Right cardiac atrium (tissue), 5 donors: ENCODE measurements at regions of chr10 and their contacts with region 1.

Region 1: GRCh38 chr10:59234816-59235429 is 58.5 kb downstream of the PHYHIPL start:
- DNase-seq: no peak
- ATAC-seq: no peak
- H3K4me3 ChIP-seq: no peak overlapping the region
- H3K27ac ChIP-seq: no peak overlapping the region
- H3K4me1 ChIP-seq: no peaks in the 10 kb centered on the region
- H3K27me3 ChIP-seq: no peaks in the 10 kb centered on the region

Region 2: DNA sequence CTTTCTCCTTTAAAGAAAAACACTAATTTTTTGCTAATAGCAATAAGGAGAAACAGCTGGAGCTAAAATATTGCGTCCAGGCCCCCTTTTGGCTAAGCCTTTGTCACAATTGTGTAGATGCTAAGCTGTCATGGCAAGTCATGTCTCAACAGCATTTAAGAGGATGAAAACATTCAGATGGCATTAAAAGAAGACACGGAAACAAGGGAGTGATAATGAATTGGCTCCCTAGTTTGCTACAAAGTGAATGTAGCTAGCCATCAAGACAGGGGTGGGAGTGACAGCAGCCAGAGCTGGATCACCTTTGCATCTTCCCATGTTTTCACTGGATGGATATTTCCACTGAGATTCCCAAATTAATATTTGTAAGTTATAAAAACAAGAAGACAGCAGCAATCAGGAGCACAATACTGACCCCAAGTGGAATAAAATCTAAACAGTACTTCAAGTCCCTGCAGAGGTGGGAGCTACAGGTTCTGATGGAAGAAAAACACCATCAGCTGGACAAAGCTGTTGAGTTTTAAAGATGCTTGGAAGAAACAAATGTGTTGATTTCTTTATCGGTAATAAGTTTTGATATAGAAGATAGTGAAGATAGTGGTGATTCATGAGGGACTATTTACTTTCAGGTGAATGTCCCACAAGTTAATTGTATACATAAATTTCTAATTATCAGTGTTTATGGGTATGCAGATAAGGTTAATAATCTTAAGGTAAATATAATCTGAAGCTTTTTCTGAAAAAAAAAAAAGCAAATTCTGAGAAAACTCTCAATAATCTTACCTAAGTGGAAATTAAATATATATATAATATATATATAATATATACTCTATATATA is 345.3 kb after region 1 on chr10:
- intact Hi-C with region 1: loop called (anchors 5 to 10 kb)
- DNase-seq: no peak
- ATAC-seq: peak; percentile 26 to 53
- H3K4me3 ChIP-seq: no peak overlapping the region
- H3K27ac ChIP-seq: no peak overlapping the region
- H3K4me1 ChIP-seq: no peaks in the 10 kb centered on the region
- H3K27me3 ChIP-seq: no peaks in the 10 kb centered on the region